Colonic mucosa (tissue), 4 donors: ENCODE measurements at regions of chr14 and their contacts with region 1.

Region 1: GRCh38 chr14:83300476-83301064 is 1766.9 kb upstream of the SEL1L start:
- DNase-seq: no peak
- H3K4me3 ChIP-seq: no peak overlapping the region
- H3K27ac ChIP-seq: no peak overlapping the region
- H3K4me1 ChIP-seq: no peaks in the 10 kb centered on the region
- H3K27me3 ChIP-seq: no peaks in the 10 kb centered on the region
- CTCF ChIP-seq: peak; percentile 49

Region 2: DNA sequence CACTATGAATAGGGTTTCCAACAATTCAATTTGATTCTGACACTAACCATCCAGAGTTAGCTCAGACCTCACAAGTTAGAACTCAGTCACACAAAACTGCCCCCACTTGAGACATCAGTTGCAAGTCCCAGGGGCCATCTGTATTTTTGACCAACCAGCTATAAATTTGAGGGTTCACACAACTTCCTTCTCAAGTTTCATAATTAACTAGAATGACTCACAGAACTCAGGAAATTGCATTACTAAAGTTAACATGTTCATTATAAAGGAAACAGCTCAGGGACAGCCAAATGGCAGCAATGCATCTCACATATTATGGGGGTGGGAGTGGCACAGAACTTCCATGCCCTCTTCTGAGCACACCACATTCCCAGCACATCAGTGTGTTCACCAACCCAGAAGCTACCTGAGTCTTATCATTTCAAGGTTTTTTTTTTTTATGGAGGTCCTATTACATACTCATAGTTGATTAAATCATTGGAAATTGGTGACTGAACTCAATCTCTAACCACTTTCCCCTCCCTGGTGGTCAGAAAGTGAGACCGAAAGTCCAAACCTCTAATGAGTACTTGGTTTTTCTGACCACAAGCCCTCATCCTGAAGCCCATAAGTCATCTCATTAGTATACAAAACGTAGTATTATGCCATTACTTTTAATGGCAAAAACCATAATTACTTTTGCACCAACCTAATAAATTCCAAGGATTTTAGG is 45.4 kb before region 1 on chr14:
- intact Hi-C with region 1: no loop called
- DNase-seq: no peak
- H3K4me3 ChIP-seq: no peak overlapping the region
- H3K27ac ChIP-seq: no peak overlapping the region
- H3K4me1 ChIP-seq: no peaks in the 10 kb centered on the region
- H3K27me3 ChIP-seq: no peaks in the 10 kb centered on the region
- CTCF ChIP-seq: no peak

Region 3: DNA sequence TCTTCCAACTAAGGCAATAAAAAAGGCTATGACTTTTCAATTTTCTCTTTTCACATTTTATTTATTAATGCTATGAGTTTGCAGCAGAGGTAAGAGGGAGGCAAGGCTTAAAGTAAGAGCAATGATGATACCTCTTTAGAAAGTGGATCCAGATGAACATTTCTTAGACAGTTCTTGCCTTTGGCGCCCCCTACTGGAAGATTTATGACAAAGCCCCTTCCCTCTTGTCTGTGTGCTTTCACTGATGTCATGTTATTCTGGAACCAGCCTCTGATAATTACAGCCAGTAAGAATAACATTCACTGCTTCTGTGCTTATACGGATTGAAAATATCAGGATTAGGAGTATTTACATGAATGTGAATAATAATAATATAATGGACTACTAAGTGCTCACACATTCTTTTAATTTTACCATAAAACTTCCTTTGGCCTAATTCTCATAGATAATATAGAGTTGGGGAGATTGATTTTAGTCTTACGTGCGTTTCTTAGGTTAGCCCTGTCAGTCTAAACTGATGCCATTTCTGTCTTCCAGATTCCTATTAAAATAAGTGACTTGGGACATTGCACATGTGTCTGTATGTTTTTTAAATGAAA is 163.0 kb after region 1 on chr14:
- intact Hi-C with region 1: loop called (anchors 5 kb)
- DNase-seq: peak; percentile 33
- H3K4me3 ChIP-seq: no peak overlapping the region
- H3K27ac ChIP-seq: no peak overlapping the region
- H3K4me1 ChIP-seq: no peaks in the 10 kb centered on the region
- H3K27me3 ChIP-seq: no peaks in the 10 kb centered on the region
- CTCF ChIP-seq: peak; percentile 49

Region 4: GRCh38 chr14:83568141-83568540 is 267.6 kb after region 1 on chr14:
- intact Hi-C with region 1: no loop called
- DNase-seq: no peak
- H3K4me3 ChIP-seq: no peak overlapping the region
- H3K27ac ChIP-seq: no peak overlapping the region
- H3K4me1 ChIP-seq: no peaks in the 10 kb centered on the region
- H3K27me3 ChIP-seq: no peaks in the 10 kb centered on the region
- CTCF ChIP-seq: no peak